Endothelial cell of umbilical vein (primary cell): ENCODE measurements at regions of chr15 and their contacts with region 1.

Region 1: DNA sequence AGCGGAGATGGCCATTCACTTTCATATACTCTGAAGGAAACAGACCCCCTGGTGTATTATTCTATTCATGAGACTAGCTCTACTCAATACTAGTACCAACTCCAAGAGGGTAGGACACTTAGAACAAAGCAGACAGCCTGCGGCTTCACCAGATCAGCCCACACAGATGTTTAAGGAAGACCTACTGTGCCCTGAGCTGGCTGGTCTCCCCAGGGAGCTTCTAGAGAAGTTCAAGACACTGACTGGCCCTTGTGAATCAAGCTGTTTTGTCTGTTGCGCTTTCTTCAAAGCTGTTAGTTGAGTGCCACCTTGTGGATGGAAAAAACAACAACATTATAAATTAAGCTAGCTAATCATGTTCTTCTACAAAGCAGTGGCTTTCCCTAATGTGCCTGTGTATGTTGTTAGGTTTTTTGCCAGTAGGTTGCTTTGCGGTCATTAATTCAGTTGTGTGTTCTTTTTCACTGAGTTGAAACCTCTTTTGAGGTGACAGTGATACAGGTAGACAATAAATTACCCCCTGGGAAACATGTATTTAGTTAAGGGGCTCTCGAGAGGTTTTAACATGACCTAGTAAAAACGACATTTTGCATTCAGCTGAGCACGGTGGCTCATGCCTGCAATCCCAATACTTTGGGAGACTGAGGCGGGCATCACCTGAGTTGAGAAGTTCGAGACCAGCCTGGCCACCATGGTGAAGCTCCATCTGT is 64.2 kb upstream of the MYZAP start:
- DNase-seq: peak; percentile 86
- H3K4me3 ChIP-seq: no peak overlapping the region
- H3K27ac ChIP-seq: no peak overlapping the region
- H3K4me1 ChIP-seq: peaks cover 35% of the 10 kb centered on the region
- H3K27me3 ChIP-seq: no peaks in the 10 kb centered on the region
- CTCF ChIP-seq: peak; percentile 41
- POLR2A ChIP-seq: no peak

Region 2: GRCh38 chr15:56821721-56822425 is 705.7 kb before region 1 on chr15:
- CTCF ChIA-PET with region 1: interaction called, 11 read pairs
- POLR2A ChIA-PET with region 1: no interaction called
- dilution Hi-C with region 1: no loop called
- intact Hi-C with region 1: loop called (anchors 2 kb)
- DNase-seq: peak; percentile 77
- H3K4me3 ChIP-seq: no peak overlapping the region
- H3K27ac ChIP-seq: no peak overlapping the region
- H3K4me1 ChIP-seq: peaks cover 18% of the 10 kb centered on the region
- H3K27me3 ChIP-seq: peaks cover 0 to 3% of the 10 kb centered on the region in 2 experiments
- CTCF ChIP-seq: peak; percentile 65 to 74
- POLR2A ChIP-seq: no peak

Region 3: DNA sequence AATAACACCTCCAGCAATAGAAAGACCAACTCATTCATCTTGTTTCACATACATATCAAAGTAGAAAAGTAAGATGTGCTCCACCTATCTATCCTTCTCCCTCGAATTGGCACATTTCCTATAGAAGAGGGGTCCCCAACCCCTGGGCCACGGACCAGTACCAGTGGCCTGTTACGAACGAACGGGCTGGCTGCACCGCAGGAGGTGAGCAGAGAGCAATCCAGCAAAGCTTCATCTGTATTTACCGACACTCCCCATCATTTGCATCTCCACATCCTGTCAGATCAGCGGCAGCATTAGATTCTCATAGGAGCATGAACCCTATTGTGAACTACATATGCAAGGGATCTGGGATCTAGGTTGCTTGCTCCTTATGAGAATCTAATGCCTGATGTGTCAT is 246.2 kb before region 1 on chr15:
- CTCF ChIA-PET with region 1: no interaction called
- POLR2A ChIA-PET with region 1: no interaction called
- dilution Hi-C with region 1: no loop called
- intact Hi-C with region 1: no loop called
- DNase-seq: no peak
- H3K4me3 ChIP-seq: no peak overlapping the region
- H3K27ac ChIP-seq: no peak overlapping the region
- H3K4me1 ChIP-seq: no peaks in the 10 kb centered on the region
- H3K27me3 ChIP-seq: no peaks in the 10 kb centered on the region
- CTCF ChIP-seq: no peak
- POLR2A ChIP-seq: no peak

Region 4: DNA sequence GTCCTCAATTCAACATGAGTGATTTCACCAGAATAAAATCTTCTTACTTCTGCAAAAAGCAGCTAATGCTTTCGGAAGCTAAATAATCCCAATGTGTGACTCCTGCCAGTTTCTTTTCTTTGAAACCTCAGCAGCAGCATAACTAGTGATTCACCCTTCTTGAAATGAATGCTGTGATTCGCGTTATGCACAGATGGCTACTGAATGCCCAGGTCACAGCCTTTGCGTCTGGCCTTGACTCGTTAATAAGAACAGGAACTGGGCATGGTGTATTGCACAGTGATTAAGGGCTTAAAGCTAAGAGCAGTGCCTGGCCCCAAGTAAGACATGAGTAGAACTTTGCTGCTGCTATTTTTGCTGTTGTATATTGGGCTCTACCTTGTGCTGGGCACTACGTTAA is 132.2 kb before region 1 on chr15:
- CTCF ChIA-PET with region 1: interaction called, 16 read pairs
- POLR2A ChIA-PET with region 1: no interaction called
- dilution Hi-C with region 1: no loop called
- intact Hi-C with region 1: loop called (anchors 2 kb)
- DNase-seq: peak; percentile 91
- H3K4me3 ChIP-seq: no peak overlapping the region
- H3K27ac ChIP-seq: no peak overlapping the region
- H3K4me1 ChIP-seq: peaks cover 56% of the 10 kb centered on the region
- H3K27me3 ChIP-seq: no peaks in the 10 kb centered on the region
- CTCF ChIP-seq: no peak
- POLR2A ChIP-seq: no peak

Region 5: GRCh38 chr15:57476533-57476975 is 51.0 kb before region 1 on chr15:
- CTCF ChIA-PET with region 1: interaction called, 9 read pairs
- POLR2A ChIA-PET with region 1: no interaction called
- dilution Hi-C with region 1: no loop called
- intact Hi-C with region 1: loop called (anchors 5 kb)
- DNase-seq: peak; percentile 47
- H3K4me3 ChIP-seq: no peak overlapping the region
- H3K27ac ChIP-seq: no peak overlapping the region
- H3K4me1 ChIP-seq: peaks cover 21% of the 10 kb centered on the region
- H3K27me3 ChIP-seq: no peaks in the 10 kb centered on the region
- CTCF ChIP-seq: no peak
- POLR2A ChIP-seq: no peak

Region 6: DNA sequence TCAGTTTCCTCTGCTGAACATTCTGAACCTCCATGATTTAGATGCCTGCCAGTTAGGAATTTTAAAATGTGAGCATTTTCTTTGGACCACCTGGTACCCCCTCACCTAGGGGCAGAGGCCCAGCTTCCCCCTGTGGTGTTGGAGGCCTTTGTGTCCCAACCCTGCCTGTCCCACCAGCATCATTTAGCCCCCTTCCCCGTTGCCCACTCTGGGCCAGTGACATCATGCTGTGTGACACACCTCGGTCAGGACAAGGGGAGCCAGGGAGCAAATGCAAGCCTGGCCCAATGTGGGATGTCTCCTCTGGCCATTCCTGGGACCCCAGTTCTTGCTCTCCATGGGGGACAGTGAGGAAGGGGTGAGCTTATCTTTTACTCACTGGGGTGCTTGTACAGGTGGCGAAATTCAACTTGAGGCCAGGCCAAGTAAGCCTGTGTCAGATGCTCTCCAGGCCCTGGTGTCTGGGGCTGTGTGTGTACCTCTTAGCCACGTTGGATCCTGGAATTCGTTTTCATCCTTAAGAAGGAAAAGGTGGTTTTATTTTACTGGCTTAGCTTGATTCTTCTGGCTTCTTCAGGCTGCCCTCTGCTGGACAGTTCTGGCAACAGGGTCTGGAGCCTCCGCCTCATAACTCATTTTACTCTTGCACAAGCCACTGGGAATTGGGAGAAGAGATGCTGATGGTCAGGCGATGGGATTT is 14.4 kb after region 1 on chr15:
- CTCF ChIA-PET with region 1: interaction called, 154 read pairs
- POLR2A ChIA-PET with region 1: no interaction called
- dilution Hi-C with region 1: no loop called
- intact Hi-C with region 1: no loop called
- DNase-seq: peak; percentile 77
- H3K4me3 ChIP-seq: no peak overlapping the region
- H3K27ac ChIP-seq: no peak overlapping the region
- H3K4me1 ChIP-seq: peaks cover 6% of the 10 kb centered on the region
- H3K27me3 ChIP-seq: no peaks in the 10 kb centered on the region
- CTCF ChIP-seq: peak; percentile 82 to 91
- POLR2A ChIP-seq: no peak

Region 7: DNA sequence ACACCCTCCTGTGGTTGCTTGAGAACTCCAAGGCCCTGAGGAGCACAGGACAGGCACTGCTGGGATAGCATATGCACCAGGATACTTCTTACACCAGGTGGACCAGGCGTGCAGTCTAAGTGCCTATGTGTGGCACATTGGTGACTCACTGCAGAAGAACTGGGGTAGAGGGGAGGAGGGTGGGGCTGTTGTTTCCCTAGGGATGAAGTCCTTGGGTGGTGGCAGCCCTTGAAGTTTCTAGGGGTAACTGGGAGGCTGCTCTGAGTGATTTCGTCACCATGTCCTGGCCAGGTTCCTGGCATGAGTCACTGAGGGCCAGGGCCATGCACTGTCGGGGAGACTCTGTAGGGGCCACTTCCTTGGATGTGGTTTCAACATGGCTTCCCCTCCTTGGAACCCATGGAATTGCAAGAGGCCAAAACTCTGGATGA is 80.0 kb after region 1 on chr15:
- CTCF ChIA-PET with region 1: no interaction called
- POLR2A ChIA-PET with region 1: no interaction called
- dilution Hi-C with region 1: no loop called
- intact Hi-C with region 1: no loop called
- DNase-seq: peak; percentile 33
- H3K4me3 ChIP-seq: no peak overlapping the region
- H3K27ac ChIP-seq: no peak overlapping the region
- H3K4me1 ChIP-seq: peaks cover 25% of the 10 kb centered on the region
- H3K27me3 ChIP-seq: no peaks in the 10 kb centered on the region
- CTCF ChIP-seq: no peak
- POLR2A ChIP-seq: no peak